ENCODE measurements at regions of chr12 and their contacts with region 1.

Region 1: GRCh38 chr12:49462083-49462744 is 76.6 kb upstream of the KCNH3 start:
- DNase-seq: no peak
- H3K4me3 ChIP-seq: no peak overlapping the region
- H3K27ac ChIP-seq: no peak overlapping the region
- H3K4me1 ChIP-seq: no peaks in the 10 kb centered on the region
- CTCF ChIP-seq: no peak

Region 2: GRCh38 chr12:49420556-49420955 is 41.7 kb before region 1 on chr12:
- CTCF ChIA-PET with region 1: no interaction called
- POLR2A ChIA-PET with region 1: interaction called, 10 read pairs
- intact Hi-C with region 1: no loop called
- DNase-seq: no peak
- H3K4me3 ChIP-seq: no peak overlapping the region
- H3K27ac ChIP-seq: no peak overlapping the region
- H3K4me1 ChIP-seq: no peaks in the 10 kb centered on the region
- CTCF ChIP-seq: no peak